Adrenal gland (tissue), 19 donors: ENCODE measurements at regions of chrX and their contacts with region 1.

Region 1: GRCh38 chrX:109911046-109911445 is 91.9 kb upstream of the TMEM164 start:
- DNase-seq: no peak
- H3K4me3 ChIP-seq: no peak overlapping the region
- H3K27ac ChIP-seq: no peak overlapping the region
- H3K4me1 ChIP-seq: no peaks in the 10 kb centered on the region
- H3K27me3 ChIP-seq: peaks cover 12% of the 10 kb centered on the region
- CTCF ChIP-seq: peak; percentile 39 to 63 (median 45)
- POLR2A ChIP-seq: no peak

Region 2: GRCh38 chrX:109974906-109975655 is 64.0 kb after region 1 on chrX:
- intact Hi-C with region 1: no loop called
- DNase-seq: peak in 2 of 7 donors; percentile 16 to 18
- H3K4me3 ChIP-seq: no peak overlapping the region
- H3K27ac ChIP-seq: no peak overlapping the region
- H3K4me1 ChIP-seq: no peaks in the 10 kb centered on the region
- H3K27me3 ChIP-seq: peaks cover 8% of the 10 kb centered on the region
- CTCF ChIP-seq: no peak
- POLR2A ChIP-seq: no peak

Region 3: GRCh38 chrX:110146521-110146920 is 235.5 kb after region 1 on chrX:
- intact Hi-C with region 1: loop called (anchors 5 to 10 kb)
- DNase-seq: peak in 6 of 7 donors; percentile 37 to 59 (median 46)
- H3K4me3 ChIP-seq: no peak overlapping the region
- H3K27ac ChIP-seq: no peak overlapping the region
- H3K4me1 ChIP-seq: no peaks in the 10 kb centered on the region
- H3K27me3 ChIP-seq: peaks cover 4% of the 10 kb centered on the region
- CTCF ChIP-seq: peak; percentile 54 to 67 (median 61)
- POLR2A ChIP-seq: no peak